GM10248 (cell line): ENCODE measurements at regions of chr5 and their contacts with region 1.

Region 1: GRCh38 chr5:135426102-135427082 is 20.8 kb downstream of the DCANP1 start:
- DNase-seq: peak; percentile 67
- CTCF ChIP-seq: peak; percentile 83

Region 2: DNA sequence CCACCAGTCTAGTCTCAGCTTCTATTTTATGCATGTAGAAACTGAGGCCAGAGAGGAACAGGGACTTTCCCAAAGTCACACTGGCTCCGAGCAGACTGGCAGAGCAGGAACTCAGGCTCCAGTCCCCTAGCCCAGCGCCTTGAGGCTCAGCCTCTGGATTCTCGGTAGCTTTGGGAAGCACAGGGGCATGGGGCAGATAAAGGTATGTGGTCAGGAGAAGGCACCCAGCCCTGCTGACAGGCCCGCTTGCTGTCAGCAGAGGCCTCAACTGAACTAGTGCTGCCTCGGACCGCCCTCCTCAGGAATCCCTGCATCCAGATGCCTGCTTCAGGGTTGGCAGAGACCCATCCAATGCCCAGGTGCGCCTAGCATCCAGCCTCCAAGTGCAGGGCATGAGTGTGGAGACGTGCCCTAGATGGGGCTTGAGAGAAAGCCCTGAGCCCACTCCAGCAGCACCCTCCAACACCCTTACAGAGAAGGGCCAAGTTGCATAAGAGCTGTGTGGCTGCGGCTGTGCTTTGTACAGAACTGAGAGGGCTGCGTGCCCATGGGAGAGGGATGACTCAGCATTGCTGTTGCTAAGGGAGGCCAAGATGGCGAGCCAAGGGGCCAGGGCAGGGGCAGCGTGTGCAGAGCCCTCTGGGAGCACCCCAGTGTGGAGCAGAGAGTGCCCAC is 196.0 kb before region 1 on chr5:
- CTCF ChIA-PET with region 1: no interaction called
- POLR2A ChIA-PET with region 1: no interaction called
- DNase-seq: no peak
- CTCF ChIP-seq: no peak

Region 3: DNA sequence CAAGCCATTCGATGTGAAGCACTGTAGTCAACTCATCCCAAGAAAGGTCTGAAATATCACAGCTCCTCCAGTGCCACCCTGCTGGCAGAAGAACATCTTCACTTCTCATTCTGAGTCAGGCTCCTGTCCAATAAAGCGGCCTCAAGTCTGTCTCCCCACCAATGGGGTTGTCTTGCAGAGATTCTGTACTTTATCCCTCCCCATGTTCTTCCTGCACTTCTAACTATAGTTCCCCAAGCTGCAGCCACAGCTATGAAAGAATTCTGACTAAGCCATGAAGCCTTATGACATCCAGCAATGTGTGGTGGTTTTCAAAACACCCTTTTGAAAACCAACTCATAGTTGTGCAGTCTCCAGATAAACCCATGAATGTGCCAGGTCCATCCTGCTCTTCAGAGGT is 34.1 kb before region 1 on chr5:
- CTCF ChIA-PET with region 1: interaction called, 10 read pairs
- POLR2A ChIA-PET with region 1: no interaction called
- DNase-seq: no peak
- CTCF ChIP-seq: no peak

Region 4: GRCh38 chr5:135410348-135410747 is 16.0 kb before region 1 on chr5:
- CTCF ChIA-PET with region 1: interaction called, 27 read pairs
- POLR2A ChIA-PET with region 1: no interaction called
- DNase-seq: no peak
- CTCF ChIP-seq: no peak

Region 5: DNA sequence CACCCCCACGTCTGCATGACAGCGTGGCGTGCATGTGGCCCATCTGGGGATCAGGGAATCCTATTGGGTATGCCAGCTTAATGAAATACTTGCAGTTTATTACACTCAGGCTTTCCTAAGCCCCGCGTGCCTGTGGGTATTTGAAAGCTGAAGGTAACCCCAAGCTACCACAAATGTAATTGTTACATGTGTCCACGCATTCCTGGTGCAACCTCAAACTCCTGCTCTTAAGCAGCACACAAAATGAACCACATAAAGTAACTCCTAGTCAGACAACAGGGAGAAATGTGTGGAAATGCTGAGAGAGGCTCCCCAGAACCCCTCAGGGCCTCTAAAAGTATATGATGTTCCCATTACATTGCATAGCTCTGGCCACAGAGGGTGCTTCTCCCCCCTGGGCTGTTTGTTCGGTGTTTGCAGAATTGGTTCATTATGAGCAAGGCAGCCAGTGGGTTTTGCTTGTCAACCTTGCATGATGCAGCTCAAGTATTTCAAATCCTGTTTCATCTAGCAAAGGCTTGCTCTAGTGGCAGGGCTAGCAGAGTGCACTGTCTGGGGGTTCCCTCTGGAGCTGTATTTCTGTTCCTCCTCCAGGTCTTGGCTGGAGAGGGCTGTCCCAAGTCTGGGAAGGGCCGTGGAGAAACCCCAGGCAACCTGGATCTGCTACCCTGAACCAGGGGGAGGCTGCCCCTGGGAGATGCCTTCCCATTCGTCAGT is 22.6 kb after region 1 on chr5:
- CTCF ChIA-PET with region 1: interaction called, 41 read pairs
- POLR2A ChIA-PET with region 1: no interaction called
- DNase-seq: no peak
- CTCF ChIP-seq: no peak